ENCODE measurements at regions of chr3 and their contacts with region 1.

Region 1: DNA sequence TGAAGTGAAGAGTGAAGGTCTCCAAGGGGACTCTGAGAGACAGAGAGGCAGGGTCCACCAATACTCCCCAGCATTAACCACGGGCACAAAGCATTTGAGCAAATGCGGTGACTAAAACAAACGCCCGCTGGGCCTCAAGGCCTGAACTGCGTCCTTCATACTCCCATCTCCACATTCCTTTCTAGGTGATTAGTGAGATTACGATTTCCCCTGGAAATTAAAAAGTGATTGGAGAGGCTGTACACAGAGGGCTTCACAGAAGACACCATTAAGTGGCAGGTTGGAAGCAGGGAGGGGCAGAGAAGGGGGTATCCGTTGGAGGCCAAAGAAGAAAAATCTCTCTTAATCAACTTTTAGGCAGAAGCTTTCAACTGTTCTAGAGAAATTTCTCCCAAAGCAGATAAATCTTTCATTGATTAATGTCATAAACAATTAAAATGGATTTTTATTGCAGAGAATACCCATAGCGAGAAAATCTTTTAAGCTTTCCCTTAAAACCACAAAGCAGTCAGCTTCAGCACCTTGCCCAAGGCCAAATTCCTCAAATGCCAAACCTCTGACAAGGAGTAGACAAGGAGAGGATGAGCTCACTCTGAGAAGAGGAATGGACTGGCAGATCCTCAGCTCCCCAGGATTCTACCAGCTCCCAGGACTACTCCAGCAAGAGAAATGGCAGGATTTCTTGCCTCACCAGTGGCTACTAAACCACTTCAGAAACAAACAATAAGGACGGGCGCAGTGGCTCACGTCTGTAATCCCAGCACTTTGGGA is 38.1 kb downstream of the MB21D2 start:
- DNase-seq: peak; percentile 83
- ATAC-seq: peak; percentile 82
- H3K4me3 ChIP-seq: peak overlapping the region in 2 of 3 experiments; percentile 8 to 43; a peak in 2 of 6 replicates
- H3K27ac ChIP-seq: peak overlapping the region; percentile 37
- H3K4me1 ChIP-seq: peaks cover 56% of the 10 kb centered on the region
- H3K27me3 ChIP-seq: no peaks in the 10 kb centered on the region
- CTCF ChIP-seq: no peak
- EP300 ChIP-seq: no peak
- POLR2A ChIP-seq: no peak
- RAD21 ChIP-seq: no peak

Region 2: GRCh38 chr3:192851821-192852424 is 27.6 kb before region 1 on chr3:
- CTCF ChIA-PET with region 1: no interaction called
- POLR2A ChIA-PET with region 1: no interaction called
- in situ Hi-C with region 1: no loop called
- intact Hi-C with region 1: loop called (anchors 1 kb)
- DNase-seq: peak; percentile 86
- ATAC-seq: peak; percentile 77
- H3K4me3 ChIP-seq: no peak overlapping the region; a peak in 1 of 6 replicates
- H3K27ac ChIP-seq: no peak overlapping the region
- H3K4me1 ChIP-seq: peaks cover 28% of the 10 kb centered on the region
- H3K27me3 ChIP-seq: no peaks in the 10 kb centered on the region
- CTCF ChIP-seq: no peak
- EP300 ChIP-seq: peak; percentile 47 to 81; a peak in 3 of 4 replicates
- POLR2A ChIP-seq: no peak
- RAD21 ChIP-seq: no peak

Region 3: GRCh38 chr3:192864941-192865340 is 14.6 kb before region 1 on chr3:
- CTCF ChIA-PET with region 1: no interaction called
- POLR2A ChIA-PET with region 1: no interaction called
- in situ Hi-C with region 1: no loop called
- intact Hi-C with region 1: no loop called
- DNase-seq: no peak
- ATAC-seq: no peak
- H3K4me3 ChIP-seq: no peak overlapping the region
- H3K27ac ChIP-seq: no peak overlapping the region
- H3K4me1 ChIP-seq: no peaks in the 10 kb centered on the region
- H3K27me3 ChIP-seq: no peaks in the 10 kb centered on the region
- CTCF ChIP-seq: no peak
- EP300 ChIP-seq: no peak
- POLR2A ChIP-seq: no peak
- RAD21 ChIP-seq: no peak

Region 4: DNA sequence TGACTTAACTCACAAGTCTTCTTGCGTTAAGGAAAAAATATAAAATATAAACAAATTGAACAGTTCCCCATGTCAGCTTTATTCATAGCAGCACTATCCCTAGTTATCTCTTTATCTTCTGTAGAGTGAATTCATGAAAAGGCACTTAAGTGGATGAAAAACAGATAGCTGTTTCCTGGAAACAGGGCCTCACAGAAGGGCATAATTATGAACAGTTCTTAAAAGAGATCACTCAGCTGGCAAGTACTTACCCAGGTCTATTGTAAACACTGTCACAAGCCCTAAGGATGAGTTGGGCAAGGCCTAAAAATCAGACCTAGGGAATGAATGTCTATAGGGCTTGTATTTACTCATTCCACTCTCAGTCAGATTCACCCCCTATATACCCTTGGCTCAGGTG is 27.4 kb after region 1 on chr3:
- CTCF ChIA-PET with region 1: no interaction called
- POLR2A ChIA-PET with region 1: no interaction called
- in situ Hi-C with region 1: no loop called
- intact Hi-C with region 1: no loop called
- DNase-seq: no peak
- ATAC-seq: no peak
- H3K4me3 ChIP-seq: no peak overlapping the region
- H3K27ac ChIP-seq: no peak overlapping the region
- H3K4me1 ChIP-seq: peaks cover 11% of the 10 kb centered on the region
- H3K27me3 ChIP-seq: no peaks in the 10 kb centered on the region
- CTCF ChIP-seq: no peak
- EP300 ChIP-seq: no peak
- POLR2A ChIP-seq: no peak
- RAD21 ChIP-seq: no peak